ENCODE measurements at regions of chr7 and their contacts with region 1.

Region 1: DNA sequence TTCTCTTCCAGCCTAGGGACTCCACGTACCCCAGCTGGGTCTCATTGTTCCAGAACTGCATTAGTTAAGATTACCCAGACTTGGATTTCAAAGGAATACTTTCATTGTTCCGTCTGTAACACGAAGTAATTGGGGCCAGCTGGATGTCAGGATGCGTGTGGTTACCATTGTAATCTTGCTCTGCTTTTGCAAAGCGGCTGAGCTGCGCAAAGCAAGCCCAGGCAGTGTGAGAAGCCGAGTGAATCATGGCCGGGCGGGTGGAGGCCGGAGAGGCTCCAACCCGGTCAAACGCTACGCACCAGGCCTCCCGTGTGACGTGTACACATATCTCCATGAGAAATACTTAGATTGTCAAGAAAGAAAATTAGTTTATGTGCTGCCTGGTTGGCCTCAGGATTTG is 21.0 kb downstream of the LRRC17 start:
- DNase-seq: peak; percentile 86 to 92 (median 90)
- H3K4me3 ChIP-seq: no peak overlapping the region
- H3K27ac ChIP-seq: peak overlapping the region; percentile 66 to 90
- H3K4me1 ChIP-seq: peaks cover 17% of the 10 kb centered on the region
- H3K27me3 ChIP-seq: no peaks in the 10 kb centered on the region
- CTCF ChIP-seq: no peak
- EP300 ChIP-seq: no peak
- POLR2A ChIP-seq: peak; percentile 41

Region 2: GRCh38 chr7:102991540-102992214 is 57.9 kb after region 1 on chr7:
- intact Hi-C with region 1: loop called in 2 of 4 experiments (anchors 5 to 10 kb)
- DNase-seq: no peak
- H3K4me3 ChIP-seq: no peak overlapping the region
- H3K27ac ChIP-seq: peak overlapping the region; percentile 16 to 77
- H3K4me1 ChIP-seq: peaks cover 25% of the 10 kb centered on the region
- H3K27me3 ChIP-seq: no peaks in the 10 kb centered on the region
- CTCF ChIP-seq: no peak
- EP300 ChIP-seq: no peak
- POLR2A ChIP-seq: no peak

Measured in ovary (tissue), 10 donors.